ENCODE measurements at regions of chr3 and their contacts with region 1.

Region 1: DNA sequence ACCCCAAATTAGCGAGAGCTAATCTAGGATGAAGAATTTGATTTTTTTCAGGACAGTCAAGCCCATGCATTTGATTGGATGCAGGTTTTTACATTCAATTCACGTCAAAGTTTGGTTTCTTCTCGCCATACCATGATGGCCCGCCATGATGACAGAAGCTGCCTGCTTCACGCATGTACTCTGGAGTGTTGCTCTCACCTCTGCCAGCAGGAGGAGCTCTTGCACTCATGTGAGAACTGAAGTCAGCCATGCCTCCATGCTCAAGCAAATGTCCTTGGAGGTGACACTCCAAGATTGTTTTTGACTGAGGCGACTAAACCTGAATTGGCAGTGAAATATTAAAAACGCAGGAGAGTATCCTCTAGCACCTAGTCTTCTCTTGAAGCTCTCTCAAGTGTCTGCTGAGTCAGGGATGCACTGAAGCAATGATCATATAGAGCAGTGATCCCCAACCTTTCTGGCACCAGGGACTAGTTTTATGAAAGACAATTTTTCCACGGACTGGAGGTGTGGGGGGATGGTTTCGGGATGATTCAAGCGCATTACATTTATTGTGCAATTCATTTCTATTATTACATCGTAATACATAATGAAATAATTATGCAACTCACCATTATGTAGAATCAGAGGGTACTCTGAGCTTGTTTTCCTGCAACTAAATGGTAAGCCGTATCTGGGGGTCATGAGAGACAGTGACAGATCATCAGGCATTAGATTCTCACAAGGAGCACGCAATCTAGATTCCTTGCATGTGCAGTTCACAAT is 121.0 kb downstream of the SAMMSON start:
- DNase-seq: peak; percentile 72
- CTCF ChIP-seq: peak; percentile 91

Region 2: GRCh38 chr3:70076396-70076795 is 44.1 kb before region 1 on chr3:
- CTCF ChIA-PET with region 1: interaction called, 14 read pairs
- POLR2A ChIA-PET with region 1: no interaction called
- DNase-seq: no peak
- CTCF ChIP-seq: no peak

Region 3: DNA sequence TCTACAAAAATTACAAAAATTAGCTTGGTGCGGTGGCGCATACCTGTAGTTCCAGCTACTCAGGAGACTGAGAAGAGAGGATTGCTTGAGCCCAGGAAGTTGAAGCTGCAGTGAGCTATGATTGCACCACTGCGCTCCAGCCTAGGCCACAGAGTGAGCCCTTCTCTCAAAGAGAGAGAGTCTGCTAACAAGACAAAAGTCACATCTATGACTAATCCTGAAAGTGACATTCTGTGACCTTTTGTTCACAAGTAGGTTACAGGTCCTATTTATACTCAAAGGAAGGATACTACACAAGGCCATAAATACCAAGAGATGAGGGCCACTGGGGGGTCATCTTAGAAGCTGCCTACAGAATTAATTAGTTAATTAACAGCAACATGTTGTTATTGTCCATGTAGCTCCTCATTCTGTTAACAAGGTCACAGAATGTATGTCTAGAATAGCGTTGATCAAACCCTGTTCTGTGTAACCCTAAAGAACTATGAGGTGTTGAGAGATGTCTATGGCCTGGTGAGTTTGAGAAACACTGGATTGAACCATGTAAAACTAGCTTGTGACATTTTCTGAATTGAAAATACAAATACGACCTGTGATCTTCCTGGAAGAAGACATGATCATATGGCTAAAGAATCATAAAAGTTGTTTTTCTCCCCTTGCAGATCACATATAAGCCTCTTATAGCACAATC is 24.0 kb before region 1 on chr3:
- CTCF ChIA-PET with region 1: interaction called, 14 read pairs
- POLR2A ChIA-PET with region 1: no interaction called
- DNase-seq: peak; percentile 29
- CTCF ChIP-seq: no peak

Region 4: GRCh38 chr3:70108072-70108471 is 12.5 kb before region 1 on chr3:
- CTCF ChIA-PET with region 1: interaction called, 113 read pairs
- POLR2A ChIA-PET with region 1: no interaction called
- DNase-seq: peak; percentile 22
- CTCF ChIP-seq: peak; percentile 39

Region 5: GRCh38 chr3:70137366-70137765 is 16.8 kb after region 1 on chr3:
- CTCF ChIA-PET with region 1: interaction called, 54 read pairs
- POLR2A ChIA-PET with region 1: no interaction called
- DNase-seq: no peak
- CTCF ChIP-seq: no peak

Region 6: DNA sequence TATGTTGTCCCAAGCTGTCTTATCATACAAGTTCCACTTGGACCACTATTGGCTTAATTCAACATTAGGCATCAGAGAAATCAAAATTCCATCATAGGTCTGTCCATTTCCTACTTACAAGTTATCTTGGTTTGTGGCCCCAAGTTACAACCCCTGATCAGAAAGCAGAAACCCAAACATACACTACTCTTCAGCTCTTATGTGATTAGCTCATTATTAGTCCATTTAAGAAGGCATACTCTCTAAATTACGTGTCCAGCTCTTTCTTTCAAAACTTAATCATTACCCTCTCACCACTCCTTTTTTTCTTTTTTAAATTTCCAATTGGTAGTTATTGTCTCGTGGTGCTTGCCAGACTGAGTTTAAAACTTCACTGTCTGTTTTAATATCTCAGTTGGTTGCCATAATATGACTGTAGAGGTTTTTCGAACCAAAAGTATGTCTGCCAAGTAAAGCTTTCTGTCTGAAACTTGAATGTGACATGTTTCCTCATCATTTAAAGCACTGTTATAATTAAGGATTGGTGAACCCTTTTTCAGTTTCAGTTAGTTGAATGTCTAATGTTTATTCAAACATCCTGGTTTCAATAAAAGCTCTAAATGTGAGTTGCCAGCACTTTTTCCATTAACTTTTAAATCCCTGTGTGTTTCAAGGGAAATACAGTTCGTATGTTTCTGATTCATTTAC is 29.3 kb after region 1 on chr3:
- CTCF ChIA-PET with region 1: interaction called, 12 read pairs
- POLR2A ChIA-PET with region 1: no interaction called
- DNase-seq: no peak
- CTCF ChIP-seq: no peak

Region 7: GRCh38 chr3:70358978-70359580 is 238.5 kb after region 1 on chr3:
- CTCF ChIA-PET with region 1: interaction called, 31 read pairs
- POLR2A ChIA-PET with region 1: no interaction called
- DNase-seq: no peak
- CTCF ChIP-seq: peak; percentile 59

Measured in GM10248 (cell line).